Activated T-helper 2 cell treated with anti-CD3 and anti-CD28 coated beads, Interferon-gamma antibody, Interleukin-2, Interleukin-4, amounts not matched to agents 10 μg/mL and 5 μg/mL and 100 μg/mL, durations not matched to agents 14 hours and 24 hours and 36 hours (primary cell): ENCODE measurements at regions of chr10 and their contacts with region 1.

Region 1: GRCh38 chr10:27241652-27242472 is 1.3 kb upstream of the ACBD5 start:
- DNase-seq: peak; percentile 86
- H3K4me3 Mint-ChIP-seq: peak overlapping the region; percentile 98
- H3K27ac Mint-ChIP-seq: peak overlapping the region; percentile 96
- H3K4me1 Mint-ChIP-seq: peaks cover 32% of the 10 kb centered on the region
- H3K27me3 Mint-ChIP-seq: peaks cover 2% of the 10 kb centered on the region

Region 2: GRCh38 chr10:26737730-26738129 is 504.1 kb before region 1 on chr10:
- intact Hi-C with region 1: loop called (anchors 5 kb)
- DNase-seq: peak; percentile 26
- H3K4me3 Mint-ChIP-seq: no peak overlapping the region
- H3K27ac Mint-ChIP-seq: peak overlapping the region; percentile 96
- H3K4me1 Mint-ChIP-seq: peaks cover 49% of the 10 kb centered on the region
- H3K27me3 Mint-ChIP-seq: no peaks in the 10 kb centered on the region

Region 3: GRCh38 chr10:27155066-27155754 is 86.7 kb before region 1 on chr10 and contains the start of gene MASTL:
- intact Hi-C with region 1: loop called (anchors 1 kb)
- DNase-seq: peak; percentile 93
- H3K4me3 Mint-ChIP-seq: peak within 1 kb of the TSS; percentile 99
- H3K27ac Mint-ChIP-seq: peak within 1 kb of the TSS; percentile 100
- H3K4me1 Mint-ChIP-seq: peaks cover 31% of the 10 kb centered on the region
- H3K27me3 Mint-ChIP-seq: no peaks in the 10 kb centered on the region
- total RNA-seq, gene MASTL: 26.7 and 29.7 TPM in 2 replicates

Region 4: DNA sequence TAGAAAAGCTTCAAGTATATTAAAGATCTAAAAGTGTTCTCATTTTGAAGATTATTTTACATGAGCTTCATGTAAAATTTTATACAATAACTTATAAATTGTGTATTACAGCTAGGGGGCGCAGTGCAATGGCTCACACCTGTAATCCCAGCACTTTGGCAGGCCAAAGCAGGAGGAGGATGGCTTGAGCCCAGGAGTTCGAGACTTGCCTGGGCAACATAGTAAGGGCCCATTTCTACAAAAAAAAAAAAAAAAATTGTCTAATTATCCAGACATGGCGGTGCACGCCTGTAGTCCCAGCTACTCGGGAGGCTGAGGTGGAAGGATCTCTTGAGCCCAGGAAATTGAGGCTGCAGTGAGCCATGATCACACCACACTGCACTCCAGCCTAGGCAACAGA is 17.9 kb before region 1 on chr10:
- intact Hi-C with region 1: no loop called
- DNase-seq: no peak
- H3K4me3 Mint-ChIP-seq: no peak overlapping the region
- H3K27ac Mint-ChIP-seq: no peak overlapping the region
- H3K4me1 Mint-ChIP-seq: peaks cover 8% of the 10 kb centered on the region
- H3K27me3 Mint-ChIP-seq: no peaks in the 10 kb centered on the region

Region 5: DNA sequence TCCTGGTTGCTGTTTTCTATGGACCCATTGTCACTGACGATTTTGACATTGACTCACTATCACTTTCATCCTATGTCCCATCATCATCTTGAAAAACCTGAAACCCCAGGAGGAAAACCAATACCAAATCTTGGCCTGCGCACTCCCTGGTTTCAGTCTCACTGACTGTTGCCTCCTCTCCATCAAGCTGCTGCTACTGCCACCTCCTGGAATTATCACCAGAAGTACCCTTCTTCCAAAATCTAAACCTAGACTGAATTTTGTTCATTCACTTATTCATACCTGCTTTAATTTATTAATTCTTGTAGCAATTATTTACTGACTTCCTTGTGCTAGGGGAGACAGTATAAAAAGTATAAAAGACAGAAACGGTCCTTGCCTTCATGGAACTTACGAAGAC is 43.2 kb after region 1 on chr10:
- intact Hi-C with region 1: loop called (anchors 5 kb)
- DNase-seq: peak; percentile 12
- H3K4me3 Mint-ChIP-seq: no peak overlapping the region
- H3K27ac Mint-ChIP-seq: no peak overlapping the region
- H3K4me1 Mint-ChIP-seq: peaks cover 7% of the 10 kb centered on the region
- H3K27me3 Mint-ChIP-seq: peaks cover 16% of the 10 kb centered on the region

Region 6: GRCh38 chr10:27328946-27329345 is 87.1 kb after region 1 on chr10:
- intact Hi-C with region 1: no loop called
- DNase-seq: no peak
- H3K4me3 Mint-ChIP-seq: no peak overlapping the region
- H3K27ac Mint-ChIP-seq: no peak overlapping the region
- H3K4me1 Mint-ChIP-seq: peaks cover 7% of the 10 kb centered on the region
- H3K27me3 Mint-ChIP-seq: peaks cover 8% of the 10 kb centered on the region

Region 7: DNA sequence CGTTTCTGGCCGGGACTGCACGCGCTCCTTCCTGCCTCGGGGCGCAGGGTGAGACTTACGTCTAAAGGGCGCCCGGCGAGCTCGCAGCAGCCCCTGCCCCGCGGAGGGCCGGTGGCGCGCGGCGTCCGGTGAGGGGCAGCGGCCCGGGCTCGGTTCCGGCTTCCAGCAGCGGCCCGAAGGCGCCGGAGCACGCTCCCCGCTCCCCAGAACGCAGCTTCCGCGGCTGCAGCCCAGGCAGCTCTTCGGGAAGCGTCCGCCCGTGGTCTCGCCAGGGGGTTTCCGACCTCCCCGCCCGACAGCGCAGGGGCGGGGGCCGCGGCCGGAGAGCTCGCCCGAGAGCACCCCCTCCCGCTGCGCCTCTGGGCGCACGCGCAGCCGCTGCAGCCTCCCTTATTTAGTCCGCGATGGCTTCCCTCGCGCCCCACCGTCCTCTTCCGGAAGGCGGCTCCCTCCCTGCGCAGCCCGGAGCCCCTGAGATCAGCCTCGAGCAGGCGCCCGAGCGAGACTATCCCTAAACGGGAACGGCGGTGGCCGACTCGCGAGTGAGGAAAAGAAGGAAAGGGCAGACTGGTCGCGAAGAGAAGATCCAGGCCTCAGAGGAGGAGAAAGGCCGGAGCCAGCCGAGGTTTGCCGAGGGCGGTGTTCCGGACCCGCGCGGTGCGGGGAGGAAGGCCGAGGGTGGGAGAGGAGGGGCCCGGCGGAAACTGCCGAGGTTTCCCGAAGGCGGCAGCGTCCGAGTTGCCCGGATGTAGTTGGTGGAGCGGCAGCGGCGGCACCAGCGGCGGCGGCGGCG is 1290.7 kb after region 1 on chr10 and contains the start of gene WAC:
- intact Hi-C with region 1: loop called (anchors 5 kb)
- DNase-seq: peak; percentile 95
- H3K4me3 Mint-ChIP-seq: peak within 1 kb of the TSS; percentile 99
- H3K27ac Mint-ChIP-seq: peak within 1 kb of the TSS; percentile 100
- H3K4me1 Mint-ChIP-seq: peaks cover 42% of the 10 kb centered on the region
- H3K27me3 Mint-ChIP-seq: no peaks in the 10 kb centered on the region
- total RNA-seq, gene WAC: 126 and 130 TPM in 2 replicates